ENCODE measurements at regions of chr15 and their contacts with region 1.

Region 1: DNA sequence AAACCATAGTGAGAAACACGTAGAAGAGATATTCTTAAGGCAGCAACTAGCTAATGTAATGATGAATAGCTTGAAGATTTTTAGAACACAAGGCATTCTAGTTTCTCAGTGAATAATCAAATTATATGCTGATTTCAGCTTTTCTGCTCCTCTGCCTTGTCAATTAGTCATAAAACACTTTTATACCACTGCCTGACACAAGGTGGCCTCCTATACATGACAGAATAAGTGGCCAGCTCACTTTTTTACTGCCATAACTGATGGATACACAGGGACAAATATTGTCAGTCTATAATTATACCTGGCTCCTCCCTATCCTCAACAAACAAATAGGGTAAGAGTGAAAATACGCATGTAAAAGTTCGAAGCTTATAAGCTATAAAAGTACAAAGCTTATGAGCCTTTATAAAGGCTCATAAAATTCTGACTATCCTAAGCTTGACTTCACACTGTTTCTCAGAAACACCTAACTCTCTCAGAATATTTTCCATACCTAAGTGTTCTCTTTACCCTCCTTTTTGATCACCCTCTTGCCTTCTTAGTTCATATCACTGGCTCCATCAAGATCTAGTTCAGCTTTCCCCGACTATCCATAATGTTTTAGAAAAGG is 81.6 kb downstream of the HERC1 start:
- DNase-seq: peak; percentile 21

Region 2: GRCh38 chr15:63264688-63265302 is 487.4 kb before region 1 on chr15:
- CTCF ChIA-PET with region 1: no interaction called
- POLR2A ChIA-PET with region 1: no interaction called
- DNase-seq: no peak

Region 3: GRCh38 chr15:63783441-63783840 is 31.3 kb after region 1 on chr15:
- CTCF ChIA-PET with region 1: no interaction called
- POLR2A ChIA-PET with region 1: no interaction called
- DNase-seq: no peak

Region 4: GRCh38 chr15:63909819-63910437 is 157.7 kb after region 1 on chr15:
- CTCF ChIA-PET with region 1: no interaction called
- POLR2A ChIA-PET with region 1: no interaction called
- DNase-seq: peak; percentile 10

Region 5: GRCh38 chr15:64067564-64068030 is 315.4 kb after region 1 on chr15:
- CTCF ChIA-PET with region 1: interaction called, 12 read pairs
- POLR2A ChIA-PET with region 1: no interaction called
- DNase-seq: peak; percentile 64

Region 6: GRCh38 chr15:64379216-64379960 is 627.2 kb after region 1 on chr15:
- CTCF ChIA-PET with region 1: no interaction called
- POLR2A ChIA-PET with region 1: no interaction called
- DNase-seq: no peak

Measured in HEK293T (cell line).